Activated T-helper 2 cell treated with anti-CD3 and anti-CD28 coated beads, Interferon-gamma antibody, Interleukin-2, Interleukin-4, amounts not matched to agents 10 μg/mL and 5 μg/mL and 100 μg/mL, durations not matched to agents 14 hours and 24 hours and 36 hours (primary cell): ENCODE measurements at regions of chr2 and their contacts with region 1.

Region 1: GRCh38 chr2:134451347-134451630 is 197.4 kb downstream of the MGAT5 start:
- DNase-seq: no peak
- H3K4me3 Mint-ChIP-seq: no peak overlapping the region
- H3K27ac Mint-ChIP-seq: no peak overlapping the region
- H3K4me1 Mint-ChIP-seq: no peaks in the 10 kb centered on the region
- H3K27me3 Mint-ChIP-seq: no peaks in the 10 kb centered on the region

Region 2: DNA sequence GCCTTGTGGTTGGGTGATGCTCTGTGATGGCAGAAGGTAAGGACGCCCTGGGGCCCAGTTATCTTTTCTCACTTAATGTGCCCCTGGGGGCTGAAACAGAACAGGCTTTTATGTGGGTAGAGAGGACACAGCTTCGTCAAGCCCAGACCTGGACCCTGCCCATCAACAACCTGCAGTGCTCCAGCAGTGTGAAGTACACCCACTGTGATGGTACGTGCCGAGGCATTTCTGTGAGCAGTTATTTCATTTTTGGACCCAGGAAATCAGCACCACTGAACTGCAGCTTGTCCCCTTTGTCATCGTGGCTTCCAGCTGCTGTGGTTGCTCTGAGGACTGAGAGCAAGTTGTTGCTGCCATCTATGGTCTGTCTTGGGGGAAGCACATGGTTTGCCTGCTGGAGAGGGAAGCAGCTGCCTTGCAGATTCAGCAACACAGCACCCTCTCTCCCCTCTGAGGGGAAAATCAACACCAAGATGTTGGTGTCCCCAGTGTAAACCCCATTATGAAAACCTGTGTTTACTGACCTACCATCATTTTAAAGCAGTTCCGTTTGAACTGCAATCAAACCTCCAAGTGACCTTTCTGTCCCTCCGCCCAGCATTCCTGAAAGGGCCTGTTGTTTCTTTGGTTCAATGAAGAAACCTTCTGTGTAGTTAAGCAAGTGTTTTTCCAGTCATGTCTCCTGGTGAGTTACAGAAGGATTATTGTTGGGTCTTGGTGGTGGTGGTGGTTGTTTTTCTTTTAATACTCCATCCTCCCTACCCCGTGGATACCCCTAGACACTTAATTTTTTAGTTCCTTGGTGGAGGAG is 39.3 kb before region 1 on chr2:
- intact Hi-C with region 1: no loop called
- DNase-seq: peak; percentile 44
- H3K4me3 Mint-ChIP-seq: no peak overlapping the region
- H3K27ac Mint-ChIP-seq: no peak overlapping the region
- H3K4me1 Mint-ChIP-seq: peaks cover 5% of the 10 kb centered on the region
- H3K27me3 Mint-ChIP-seq: peaks cover 4% of the 10 kb centered on the region

Region 3: GRCh38 chr2:134897932-134898331 is 446.6 kb after region 1 on chr2:
- intact Hi-C with region 1: loop called (anchors 1 kb)
- DNase-seq: no peak
- H3K4me3 Mint-ChIP-seq: no peak overlapping the region
- H3K27ac Mint-ChIP-seq: no peak overlapping the region
- H3K4me1 Mint-ChIP-seq: no peaks in the 10 kb centered on the region
- H3K27me3 Mint-ChIP-seq: peaks cover 27% of the 10 kb centered on the region